ENCODE measurements at regions of chr15 and their contacts with region 1.

Region 1: GRCh38 chr15:81939604-81940440 is 106.0 kb downstream of the MEX3B start:
- DNase-seq: peak; percentile 42
- H3K4me3 ChIP-seq: no peak overlapping the region
- H3K27ac ChIP-seq: no peak overlapping the region
- H3K4me1 ChIP-seq: peaks cover 0 to 4% of the 10 kb centered on the region in 2 experiments; a peak in 2 of 4 replicates
- H3K27me3 ChIP-seq: no peaks in the 10 kb centered on the region
- CTCF ChIP-seq: peak; percentile 71
- EP300 ChIP-seq: no peak
- RAD21 ChIP-seq: peak; percentile 79

Region 2: GRCh38 chr15:81950841-81951414 is 11.1 kb after region 1 on chr15:
- CTCF ChIA-PET with region 1: interaction called, 10 read pairs
- POLR2A ChIA-PET with region 1: no interaction called
- DNase-seq: peak; percentile 9
- H3K4me3 ChIP-seq: no peak overlapping the region
- H3K27ac ChIP-seq: no peak overlapping the region
- H3K4me1 ChIP-seq: peaks cover 0 to 3% of the 10 kb centered on the region in 2 experiments; a peak in 1 of 4 replicates
- H3K27me3 ChIP-seq: no peaks in the 10 kb centered on the region
- CTCF ChIP-seq: no peak
- EP300 ChIP-seq: no peak
- RAD21 ChIP-seq: no peak

Measured in SK-N-SH (cell line).